ENCODE measurements at regions of chr7 and their contacts with region 1.

Region 1: GRCh38 chr7:50397320-50397970 is 52.7 kb downstream of the FIGNL1 start:
- DNase-seq: peak in 1 of 9 donors; percentile 48
- ATAC-seq: peak; percentile 62
- H3K4me3 ChIP-seq: no peak overlapping the region
- H3K4me3 Mint-ChIP-seq: peak overlapping the region in 6 of 10 donors; percentile 26 to 75 (median 58)
- H3K27ac ChIP-seq: peak overlapping the region; percentile 59
- H3K27ac Mint-ChIP-seq: peak overlapping the region; percentile 80 to 98 (median 93)
- H3K4me1 ChIP-seq: peaks cover 31 to 60% of the 10 kb centered on the region in 2 donors
- H3K4me1 Mint-ChIP-seq: peaks cover 45 to 84% (median 73%) of the 10 kb centered on the region in 7 donors
- H3K27me3 ChIP-seq: no peaks in the 10 kb centered on the region
- H3K27me3 Mint-ChIP-seq: no peaks in the 10 kb centered on the region

Region 2: GRCh38 chr7:50185208-50185607 is 212.2 kb before region 1 on chr7:
- CTCF ChIA-PET with region 1: no interaction called
- POLR2A ChIA-PET with region 1: no interaction called
- intact Hi-C with region 1: no loop called
- DNase-seq: no peak
- ATAC-seq: peak; percentile 63
- H3K4me3 ChIP-seq: no peak overlapping the region
- H3K4me3 Mint-ChIP-seq: no peak overlapping the region
- H3K27ac ChIP-seq: no peak overlapping the region
- H3K27ac Mint-ChIP-seq: no peak overlapping the region
- H3K4me1 ChIP-seq: no peaks in the 10 kb centered on the region
- H3K4me1 Mint-ChIP-seq: peaks cover 0 to 11% (median 0%) of the 10 kb centered on the region in 7 donors
- H3K27me3 ChIP-seq: no peaks in the 10 kb centered on the region
- H3K27me3 Mint-ChIP-seq: peaks cover 0 to 12% (median 0%) of the 10 kb centered on the region in 5 donors

Region 3: GRCh38 chr7:50349963-50350944 is 47.2 kb before region 1 on chr7:
- CTCF ChIA-PET with region 1: no interaction called
- POLR2A ChIA-PET with region 1: interaction called, 3 read pairs
- intact Hi-C with region 1: loop called in 1 of 2 experiments (anchors 1 kb)
- DNase-seq: peak in 5 of 9 donors; percentile 55 to 77 (median 68)
- ATAC-seq: peak; percentile 51
- H3K4me3 ChIP-seq: peak overlapping the region; percentile 4
- H3K4me3 Mint-ChIP-seq: peak overlapping the region; percentile 71 to 95 (median 78)
- H3K27ac ChIP-seq: peak overlapping the region; percentile 93
- H3K27ac Mint-ChIP-seq: peak overlapping the region in 6 of 9 donors; percentile 91 to 100 (median 100)
- H3K4me1 ChIP-seq: peaks cover 96% of the 10 kb centered on the region in 2 donors
- H3K4me1 Mint-ChIP-seq: peaks cover 0 to 100% (median 97%) of the 10 kb centered on the region in 7 donors
- H3K27me3 ChIP-seq: no peaks in the 10 kb centered on the region
- H3K27me3 Mint-ChIP-seq: no peaks in the 10 kb centered on the region

Region 4: DNA sequence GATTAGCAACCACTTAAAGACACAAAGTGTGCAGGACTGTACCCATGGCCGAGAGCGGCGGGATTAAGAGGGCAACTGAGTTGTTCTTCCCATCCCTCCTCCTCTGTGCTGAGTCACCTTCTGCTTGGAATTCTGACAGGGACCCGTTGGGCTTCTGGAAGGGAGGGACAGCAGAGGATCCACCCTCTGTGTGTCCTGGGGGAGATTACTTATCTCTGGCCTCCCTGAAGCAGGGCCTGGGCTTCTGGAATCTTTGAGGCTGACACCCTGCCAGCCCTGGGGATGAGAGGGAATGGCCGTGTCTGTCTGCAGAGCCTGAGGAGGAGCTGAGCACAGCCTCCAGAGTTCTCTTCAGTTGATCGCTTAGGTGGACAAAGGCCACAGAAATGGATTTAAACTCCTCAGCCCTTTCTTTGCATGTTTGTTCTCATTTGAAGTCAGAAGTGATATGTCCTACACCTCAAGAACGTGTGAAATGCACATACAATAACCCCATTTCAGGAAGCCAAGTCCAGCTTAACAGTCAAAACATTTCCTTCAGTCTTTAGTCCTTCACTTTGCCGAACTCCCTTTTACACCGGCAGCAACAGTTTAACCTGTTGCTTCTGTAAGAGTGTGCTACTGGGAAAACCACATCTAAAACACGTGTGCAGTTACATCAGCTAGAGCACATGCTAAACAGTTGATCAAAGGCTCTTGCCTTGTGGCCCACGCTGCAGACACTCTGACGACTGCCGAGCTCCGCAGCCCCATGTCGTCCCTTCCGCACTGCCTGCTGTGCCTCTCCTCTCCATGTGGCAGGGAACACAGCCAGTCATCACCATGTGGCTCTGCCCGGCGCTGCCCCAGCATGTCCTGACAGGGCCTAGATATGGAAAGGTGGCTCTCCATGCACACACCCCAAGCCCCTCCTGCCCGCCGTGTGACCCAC is 37.2 kb before region 1 on chr7:
- CTCF ChIA-PET with region 1: no interaction called
- POLR2A ChIA-PET with region 1: no interaction called
- intact Hi-C with region 1: no loop called
- DNase-seq: peak; percentile 58 to 93 (median 88)
- ATAC-seq: peak; percentile 92
- H3K4me3 ChIP-seq: peak overlapping the region; percentile 5
- H3K4me3 Mint-ChIP-seq: peak overlapping the region; percentile 73 to 89 (median 78)
- H3K27ac ChIP-seq: peak overlapping the region; percentile 94
- H3K27ac Mint-ChIP-seq: peak overlapping the region in 6 of 9 donors; percentile 91 to 100 (median 100)
- H3K4me1 ChIP-seq: peaks cover 95 to 98% of the 10 kb centered on the region in 2 donors
- H3K4me1 Mint-ChIP-seq: peaks cover 86 to 100% (median 97%) of the 10 kb centered on the region in 7 donors
- H3K27me3 ChIP-seq: no peaks in the 10 kb centered on the region
- H3K27me3 Mint-ChIP-seq: no peaks in the 10 kb centered on the region

Region 5: DNA sequence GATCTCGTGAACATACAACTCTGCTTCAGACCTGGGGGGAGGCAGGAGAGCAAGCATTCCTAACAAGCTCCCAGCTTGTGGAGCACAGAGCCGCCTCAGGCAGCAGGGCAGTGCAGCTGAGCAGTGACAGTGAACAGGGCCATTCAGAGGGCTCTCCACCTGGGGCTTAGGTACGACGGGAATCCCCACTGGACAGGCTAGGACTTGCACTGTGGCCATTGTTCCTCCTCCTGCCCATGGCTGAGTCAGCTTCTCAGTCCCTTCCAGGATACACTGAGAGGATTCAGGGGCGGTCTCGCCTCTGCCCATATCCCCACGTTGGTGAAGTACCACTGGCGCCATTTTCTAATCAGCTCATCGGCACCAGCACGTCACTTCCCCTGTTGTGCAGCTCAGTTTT is 18.4 kb before region 1 on chr7:
- CTCF ChIA-PET with region 1: interaction called, 3 read pairs
- POLR2A ChIA-PET with region 1: interaction called, 3 read pairs
- intact Hi-C with region 1: loop called (anchors 1 to 2 kb)
- DNase-seq: no peak
- ATAC-seq: peak; percentile 14
- H3K4me3 ChIP-seq: no peak overlapping the region
- H3K4me3 Mint-ChIP-seq: peak overlapping the region in 9 of 10 donors; percentile 5 to 65 (median 27)
- H3K27ac ChIP-seq: peak overlapping the region; percentile 69
- H3K27ac Mint-ChIP-seq: peak overlapping the region in 7 of 9 donors; percentile 60 to 99 (median 78)
- H3K4me1 ChIP-seq: peaks cover 29 to 72% of the 10 kb centered on the region in 2 donors
- H3K4me1 Mint-ChIP-seq: peaks cover 60 to 100% (median 99%) of the 10 kb centered on the region in 7 donors
- H3K27me3 ChIP-seq: no peaks in the 10 kb centered on the region
- H3K27me3 Mint-ChIP-seq: no peaks in the 10 kb centered on the region

Region 6: GRCh38 chr7:50423860-50424259 is 26.4 kb after region 1 on chr7:
- CTCF ChIA-PET with region 1: no interaction called
- POLR2A ChIA-PET with region 1: no interaction called
- intact Hi-C with region 1: no loop called
- DNase-seq: no peak
- ATAC-seq: no peak
- H3K4me3 ChIP-seq: no peak overlapping the region
- H3K4me3 Mint-ChIP-seq: no peak overlapping the region
- H3K27ac ChIP-seq: no peak overlapping the region
- H3K27ac Mint-ChIP-seq: no peak overlapping the region
- H3K4me1 ChIP-seq: no peaks in the 10 kb centered on the region
- H3K4me1 Mint-ChIP-seq: no peaks in the 10 kb centered on the region
- H3K27me3 ChIP-seq: no peaks in the 10 kb centered on the region
- H3K27me3 Mint-ChIP-seq: no peaks in the 10 kb centered on the region

Region 7: GRCh38 chr7:50449881-50450589 is 52.6 kb after region 1 on chr7 and contains the start of gene FIGNL1:
- CTCF ChIA-PET with region 1: no interaction called
- POLR2A ChIA-PET with region 1: interaction called, 3 read pairs
- intact Hi-C with region 1: loop called in 1 of 2 experiments (anchors 2 kb)
- DNase-seq: peak; percentile 61 to 87 (median 84)
- ATAC-seq: peak; percentile 98
- H3K4me3 ChIP-seq: peak within 1 kb of the TSS; percentile 63
- H3K4me3 Mint-ChIP-seq: peak within 1 kb of the TSS; percentile 91 to 96 (median 94)
- H3K27ac ChIP-seq: peak within 1 kb of the TSS; percentile 94
- H3K27ac Mint-ChIP-seq: peak within 1 kb of the TSS; percentile 92 to 99 (median 96)
- H3K4me1 ChIP-seq: peaks cover 13 to 14% of the 10 kb centered on the region in 2 donors
- H3K4me1 Mint-ChIP-seq: peaks cover 14 to 43% (median 29%) of the 10 kb centered on the region in 7 donors
- H3K27me3 ChIP-seq: no peaks in the 10 kb centered on the region
- H3K27me3 Mint-ChIP-seq: peaks cover 0 to 11% (median 0%) of the 10 kb centered on the region in 5 donors
- total RNA-seq, gene FIGNL1: 7.7 to 30.2 (median 14.3) TPM

Region 8: DNA sequence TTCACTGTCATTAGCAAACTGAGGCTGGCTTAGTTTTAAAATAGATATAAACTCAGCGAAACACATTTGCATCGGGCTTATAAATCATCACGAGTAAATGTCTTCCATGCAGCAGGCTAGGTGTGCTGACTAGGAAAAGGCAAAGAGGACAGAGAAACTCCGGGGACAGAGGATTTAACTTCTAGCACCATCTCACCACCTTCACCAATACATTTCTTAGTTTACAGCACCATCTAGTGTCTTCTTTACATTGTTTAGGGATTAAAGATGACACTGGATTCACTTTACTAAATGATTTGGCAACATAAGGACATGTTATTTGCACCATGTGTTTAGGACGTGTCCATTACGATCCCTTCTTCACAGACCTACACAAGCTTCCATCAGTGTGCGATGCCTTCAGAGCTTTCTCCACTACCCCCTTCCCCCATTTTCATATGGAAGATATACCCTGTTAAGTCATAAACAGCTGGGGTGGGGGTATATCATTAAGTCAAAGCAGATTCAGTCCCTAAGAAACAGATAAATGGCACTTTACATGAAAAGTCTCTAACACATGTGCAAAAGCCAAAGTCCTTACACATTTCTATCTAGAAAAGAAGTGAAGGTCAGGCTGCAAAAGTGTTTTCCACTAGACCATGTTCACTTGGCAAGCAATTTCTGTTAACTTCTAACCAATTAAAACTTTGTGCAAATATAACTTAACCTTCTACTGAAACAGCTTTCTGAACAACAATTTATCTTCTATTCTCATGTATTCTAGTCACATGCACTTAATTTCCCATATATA is 282.0 kb after region 1 on chr7:
- CTCF ChIA-PET with region 1: no interaction called
- POLR2A ChIA-PET with region 1: no interaction called
- intact Hi-C with region 1: loop called in 1 of 2 experiments (anchors 2 kb)
- DNase-seq: peak in 6 of 9 donors; percentile 27 to 59 (median 54)
- ATAC-seq: peak; percentile 73
- H3K4me3 ChIP-seq: no peak overlapping the region
- H3K4me3 Mint-ChIP-seq: no peak overlapping the region
- H3K27ac ChIP-seq: no peak overlapping the region
- H3K27ac Mint-ChIP-seq: no peak overlapping the region
- H3K4me1 ChIP-seq: no peaks in the 10 kb centered on the region
- H3K4me1 Mint-ChIP-seq: peaks cover 0 to 5% (median 0%) of the 10 kb centered on the region in 7 donors
- H3K27me3 ChIP-seq: no peaks in the 10 kb centered on the region
- H3K27me3 Mint-ChIP-seq: peaks cover 0 to 22% (median 0%) of the 10 kb centered on the region in 5 donors